ENCODE measurements at regions of chr1 and their contacts with region 1.

Region 1: DNA sequence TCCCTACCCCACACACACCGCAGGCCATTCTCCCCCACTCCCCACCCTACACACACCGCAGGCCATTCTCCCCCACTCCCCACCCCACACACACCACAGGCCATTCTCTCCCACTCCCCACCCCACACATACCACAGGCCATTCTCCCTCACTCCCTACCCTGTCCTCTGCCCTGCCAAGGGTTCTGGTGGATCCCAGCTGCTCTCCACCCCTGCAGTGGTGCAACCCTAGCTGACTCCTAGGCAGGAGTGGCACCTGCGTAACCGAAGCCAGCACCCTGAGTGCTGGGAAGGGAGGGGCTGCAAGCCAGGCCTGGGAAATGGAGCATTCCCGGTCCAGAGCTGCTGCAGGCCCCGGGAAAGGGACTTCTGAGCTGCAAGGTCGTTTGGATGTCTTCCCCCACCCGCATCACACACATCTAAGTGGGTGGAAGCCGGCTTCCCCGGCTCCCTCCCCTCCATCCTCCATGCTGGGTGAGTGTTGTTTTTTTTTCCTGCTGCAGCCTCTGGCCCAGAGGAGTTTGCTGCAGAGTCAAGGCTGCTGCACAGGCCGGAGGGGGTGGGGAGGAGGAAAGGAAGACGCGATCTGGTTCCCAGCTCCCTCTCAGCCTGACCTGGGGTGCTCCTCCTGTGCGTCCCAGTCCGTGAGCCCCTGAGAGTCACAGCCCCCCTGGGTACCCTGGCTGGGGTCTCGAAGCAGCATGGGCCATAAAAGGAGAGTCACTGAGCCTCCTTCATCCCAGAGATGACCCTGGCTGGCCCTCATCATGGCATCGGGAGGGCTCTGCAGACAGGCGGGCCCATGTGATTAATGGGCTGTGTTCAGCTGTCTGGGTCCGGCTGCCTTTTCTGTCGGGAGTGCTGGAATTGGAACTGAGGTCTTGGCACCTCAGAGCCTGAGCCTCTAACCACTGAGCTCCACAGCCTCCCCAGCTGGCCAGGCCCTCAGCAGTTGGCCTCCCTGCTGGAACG is 16.1 kb downstream of the H6PD start:
- DNase-seq: no peak
- ATAC-seq: no peak
- H3K4me3 ChIP-seq: no peak overlapping the region
- H3K27ac ChIP-seq: no peak overlapping the region
- H3K4me1 ChIP-seq: peaks cover 2% of the 10 kb centered on the region; the same call in 1 of the 2 replicates
- H3K27me3 ChIP-seq: no peaks in the 10 kb centered on the region
- CTCF ChIP-seq: no peak

Region 2: GRCh38 chr1:9275567-9276034 is 24.9 kb after region 1 on chr1:
- CTCF ChIA-PET with region 1: no interaction called
- POLR2A ChIA-PET with region 1: no interaction called
- in situ Hi-C with region 1: no loop called
- intact Hi-C with region 1: no loop called
- DNase-seq: peak; percentile 85
- ATAC-seq: peak; percentile 92
- H3K4me3 ChIP-seq: peak overlapping the region in 1 of 2 experiments; percentile 26; a peak in 2 of 4 replicates
- H3K27ac ChIP-seq: peak overlapping the region; percentile 93
- H3K4me1 ChIP-seq: peaks cover 46% of the 10 kb centered on the region
- H3K27me3 ChIP-seq: no peaks in the 10 kb centered on the region
- CTCF ChIP-seq: no peak

Region 3: DNA sequence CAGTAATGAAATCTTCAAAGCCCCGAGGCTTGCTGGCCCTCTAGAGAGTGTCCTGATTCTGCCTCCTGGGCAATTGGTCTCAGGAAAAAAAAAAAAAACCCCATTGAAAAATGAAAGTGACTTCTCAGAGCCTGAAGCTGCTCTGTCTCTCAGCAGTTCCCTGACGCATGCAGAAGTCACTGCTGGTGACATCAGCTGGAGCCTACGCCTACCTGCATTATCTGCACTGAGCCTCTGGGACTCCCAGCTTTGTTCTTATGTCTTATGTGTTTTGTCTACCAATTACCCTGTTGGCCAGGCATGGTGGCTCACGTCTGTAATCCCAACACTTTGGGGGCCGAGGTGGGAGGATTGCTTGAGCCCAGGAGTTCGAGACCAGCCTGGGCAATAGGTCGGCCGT is 278.5 kb after region 1 on chr1:
- CTCF ChIA-PET with region 1: no interaction called
- POLR2A ChIA-PET with region 1: interaction called, 10 read pairs
- in situ Hi-C with region 1: no loop called
- intact Hi-C with region 1: no loop called
- DNase-seq: no peak
- ATAC-seq: peak; percentile 68; the same call in 1 of the 2 replicates
- H3K4me3 ChIP-seq: no peak overlapping the region
- H3K27ac ChIP-seq: no peak overlapping the region
- H3K4me1 ChIP-seq: no peaks in the 10 kb centered on the region
- H3K27me3 ChIP-seq: no peaks in the 10 kb centered on the region
- CTCF ChIP-seq: no peak

Measured in Panc1 (cell line).